ENCODE measurements at regions of chr3 and their contacts with region 1.

Region 1: GRCh38 chr3:182782149-182782548 is 11.2 kb upstream of the ATP11B start:
- DNase-seq: no peak
- ATAC-seq: no peak
- H3K4me3 Mint-ChIP-seq: no peak overlapping the region
- H3K27ac Mint-ChIP-seq: no peak overlapping the region
- H3K4me1 Mint-ChIP-seq: peaks cover 0 to 4% (median 0%) of the 10 kb centered on the region in 4 donors
- H3K27me3 Mint-ChIP-seq: peaks cover 7 to 28% (median 16%) of the 10 kb centered on the region in 5 donors

Region 2: GRCh38 chr3:182792901-182793662 is 10.9 kb after region 1 on chr3 and contains the start of gene ATP11B:
- POLR2A ChIA-PET with region 1: interaction called, 13 read pairs
- DNase-seq: peak; percentile 75 to 90 (median 86)
- ATAC-seq: peak; percentile 67 to 71
- H3K4me3 Mint-ChIP-seq: peak within 1 kb of the TSS; percentile 96 to 100 (median 99)
- H3K27ac Mint-ChIP-seq: peak within 1 kb of the TSS; percentile 99 to 100 (median 100)
- H3K4me1 Mint-ChIP-seq: peaks cover 15 to 43% (median 29%) of the 10 kb centered on the region in 4 donors
- H3K27me3 Mint-ChIP-seq: no peaks in the 10 kb centered on the region
- polyA plus RNA-seq, gene ATP11B: 31.6 to 48.7 (median 39.5) TPM